Panc1 (cell line): ENCODE measurements at regions of chr10 and their contacts with region 1.

Region 1: DNA sequence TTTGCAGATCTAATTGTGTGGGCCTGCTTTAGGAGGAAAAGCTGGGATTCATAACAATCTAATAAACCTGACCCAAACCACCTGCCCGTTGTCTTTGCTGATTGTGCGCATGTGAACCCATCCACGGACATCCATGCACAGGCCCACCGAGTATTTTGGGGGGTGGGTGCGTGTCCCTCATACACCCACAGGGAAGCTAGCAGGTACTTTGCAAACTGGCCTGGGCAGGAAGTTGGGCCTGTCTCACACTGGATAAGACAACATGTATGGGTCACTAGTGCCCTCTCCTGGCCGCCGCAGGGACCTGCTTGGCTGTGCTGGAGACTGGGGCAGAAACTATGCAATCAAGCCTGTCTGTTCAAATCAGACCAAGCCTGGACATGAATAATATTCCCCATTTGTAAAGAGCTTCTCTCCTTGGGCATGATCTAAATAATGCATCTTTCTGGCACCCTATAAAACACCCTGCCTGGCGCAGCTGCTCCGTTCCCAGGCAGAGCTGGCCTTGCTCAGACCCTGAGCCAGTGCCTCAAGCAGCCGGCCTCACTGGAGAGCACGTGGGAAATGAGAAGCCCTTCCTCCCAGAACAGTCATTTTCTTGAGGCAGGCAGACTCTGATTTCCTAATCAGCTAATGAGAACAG is 15.8 kb downstream of the ECHDC3 start:
- DNase-seq: peak; percentile 36
- ATAC-seq: peak; percentile 99
- H3K4me3 ChIP-seq: no peak overlapping the region
- H3K27ac ChIP-seq: no peak overlapping the region
- H3K4me1 ChIP-seq: no peaks in the 10 kb centered on the region
- H3K27me3 ChIP-seq: no peaks in the 10 kb centered on the region
- CTCF ChIP-seq: peak; percentile 87

Region 2: GRCh38 chr10:11472158-11472753 is 285.7 kb before region 1 on chr10:
- CTCF ChIA-PET with region 1: no interaction called
- POLR2A ChIA-PET with region 1: no interaction called
- in situ Hi-C with region 1: no loop called
- intact Hi-C with region 1: no loop called
- DNase-seq: peak; percentile 41
- ATAC-seq: peak; percentile 83; the same call in 1 of the 2 replicates
- H3K4me3 ChIP-seq: no peak overlapping the region
- H3K27ac ChIP-seq: no peak overlapping the region
- H3K4me1 ChIP-seq: no peaks in the 10 kb centered on the region
- H3K27me3 ChIP-seq: no peaks in the 10 kb centered on the region
- CTCF ChIP-seq: peak; percentile 84

Region 3: GRCh38 chr10:11515596-11516430 is 242.1 kb before region 1 on chr10:
- CTCF ChIA-PET with region 1: interaction called, 5 read pairs
- POLR2A ChIA-PET with region 1: no interaction called
- in situ Hi-C with region 1: no loop called
- intact Hi-C with region 1: loop called (anchors 1 kb)
- DNase-seq: peak; percentile 43
- ATAC-seq: peak; percentile 79; the same call in 1 of the 2 replicates
- H3K4me3 ChIP-seq: no peak overlapping the region
- H3K27ac ChIP-seq: no peak overlapping the region
- H3K4me1 ChIP-seq: no peaks in the 10 kb centered on the region
- H3K27me3 ChIP-seq: no peaks in the 10 kb centered on the region
- CTCF ChIP-seq: peak; percentile 69

Region 4: GRCh38 chr10:11525503-11525902 is 232.4 kb before region 1 on chr10:
- CTCF ChIA-PET with region 1: no interaction called
- POLR2A ChIA-PET with region 1: interaction called, 17 read pairs
- in situ Hi-C with region 1: no loop called
- intact Hi-C with region 1: no loop called
- DNase-seq: no peak
- ATAC-seq: no peak
- H3K4me3 ChIP-seq: no peak overlapping the region
- H3K27ac ChIP-seq: no peak overlapping the region
- H3K4me1 ChIP-seq: no peaks in the 10 kb centered on the region; the same call in 1 of the 2 replicates
- H3K27me3 ChIP-seq: no peaks in the 10 kb centered on the region
- CTCF ChIP-seq: no peak

Region 5: DNA sequence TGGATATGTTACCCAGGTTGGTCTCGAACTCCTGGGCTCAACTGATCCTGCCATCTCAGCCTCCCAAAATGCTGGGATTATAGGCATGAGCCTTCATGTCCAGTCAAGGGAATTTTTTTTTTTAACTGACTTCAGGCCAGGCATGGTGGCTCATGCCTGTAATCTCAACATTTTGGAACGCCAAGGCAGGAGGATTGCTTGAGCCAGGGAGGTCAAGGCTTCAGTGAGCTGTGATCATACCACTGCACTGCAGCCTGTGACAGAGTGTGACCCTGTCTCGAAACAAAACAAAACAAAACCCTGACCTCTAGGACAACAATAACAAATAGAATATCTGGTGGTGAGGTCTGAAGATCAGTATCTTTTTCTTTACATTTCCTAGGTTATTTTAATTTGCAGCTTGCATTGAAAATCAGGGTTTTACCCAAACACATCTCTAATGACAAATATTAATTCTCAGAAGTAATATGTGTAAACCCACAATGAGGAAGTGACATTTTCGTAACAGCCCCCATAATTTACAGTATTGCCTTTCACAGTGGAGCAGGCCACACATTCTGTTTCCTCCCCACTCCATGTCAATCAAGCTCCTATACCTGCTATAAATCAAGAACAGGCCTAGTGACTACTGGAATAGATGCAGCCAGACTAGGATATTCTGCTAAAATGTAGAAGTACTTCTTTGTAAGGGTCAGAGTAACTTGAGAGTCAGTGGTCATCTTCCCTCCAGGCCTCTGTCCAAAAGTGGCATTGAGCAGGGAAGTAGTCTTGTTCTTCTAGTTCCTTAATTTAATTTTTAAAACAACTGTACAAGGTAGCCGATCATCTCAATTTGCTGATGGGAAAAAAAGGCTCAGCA is 59.0 kb before region 1 on chr10:
- CTCF ChIA-PET with region 1: no interaction called
- POLR2A ChIA-PET with region 1: no interaction called
- in situ Hi-C with region 1: no loop called
- intact Hi-C with region 1: loop called (anchors 2 kb)
- DNase-seq: no peak
- ATAC-seq: no peak
- H3K4me3 ChIP-seq: no peak overlapping the region
- H3K27ac ChIP-seq: no peak overlapping the region
- H3K4me1 ChIP-seq: no peaks in the 10 kb centered on the region
- H3K27me3 ChIP-seq: no peaks in the 10 kb centered on the region
- CTCF ChIP-seq: no peak

Region 6: GRCh38 chr10:11962176-11962575 is 204.2 kb after region 1 on chr10:
- CTCF ChIA-PET with region 1: no interaction called
- POLR2A ChIA-PET with region 1: no interaction called
- in situ Hi-C with region 1: no loop called
- intact Hi-C with region 1: no loop called
- DNase-seq: no peak
- ATAC-seq: no peak
- H3K4me3 ChIP-seq: no peak overlapping the region
- H3K27ac ChIP-seq: no peak overlapping the region
- H3K4me1 ChIP-seq: no peaks in the 10 kb centered on the region
- H3K27me3 ChIP-seq: no peaks in the 10 kb centered on the region
- CTCF ChIP-seq: no peak